Heart right ventricle (tissue), 16 donors: ENCODE measurements at regions of chr5 and their contacts with region 1.

Region 1: GRCh38 chr5:94442991-94443390 is 175.4 kb downstream of the KIAA0825 start:
- DNase-seq: no peak
- ATAC-seq: no peak
- H3K4me3 ChIP-seq: no peak overlapping the region
- H3K27ac ChIP-seq: no peak overlapping the region
- H3K4me1 ChIP-seq: no peaks in the 10 kb centered on the region
- H3K27me3 ChIP-seq: no peaks in the 10 kb centered on the region
- CTCF ChIP-seq: no peak

Region 2: GRCh38 chr5:94420885-94421284 is 22.1 kb before region 1 on chr5:
- intact Hi-C with region 1: loop called in 1 of 10 experiments (anchors 1 kb)
- DNase-seq: no peak
- ATAC-seq: no peak
- H3K4me3 ChIP-seq: no peak overlapping the region
- H3K27ac ChIP-seq: no peak overlapping the region
- H3K4me1 ChIP-seq: peaks cover 0 to 20% (median 0%) of the 10 kb centered on the region in 9 donors
- H3K27me3 ChIP-seq: no peaks in the 10 kb centered on the region
- CTCF ChIP-seq: no peak

Region 3: DNA sequence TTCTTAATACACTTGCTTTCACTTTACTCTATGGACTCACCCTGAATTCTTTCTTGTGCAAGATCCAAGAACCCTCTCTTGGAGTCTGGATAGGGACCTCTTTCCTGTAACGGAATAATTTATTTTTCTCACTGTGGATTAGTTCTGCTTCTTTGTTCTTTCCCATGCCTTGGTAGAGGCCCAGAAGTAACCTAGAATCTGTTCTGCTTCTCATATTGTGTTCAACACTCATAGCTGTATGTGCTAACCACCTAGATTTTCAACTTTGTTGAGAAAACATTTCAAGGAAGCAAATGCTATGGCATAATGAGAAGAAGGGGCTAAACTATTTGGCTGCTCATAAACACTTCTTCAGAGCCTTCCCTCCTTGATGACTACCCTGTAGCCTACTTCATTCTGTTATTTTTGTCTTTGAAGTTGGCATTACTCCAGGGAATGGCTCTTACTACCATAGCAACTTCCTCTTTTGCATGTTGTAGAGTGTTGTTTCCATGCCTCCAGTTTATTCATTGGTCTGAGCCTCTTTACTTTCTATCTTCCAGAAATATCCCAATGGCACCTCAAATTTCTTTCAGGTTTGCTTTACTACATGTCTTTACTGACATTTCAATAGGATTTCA is 101.2 kb after region 1 on chr5:
- intact Hi-C with region 1: no loop called
- DNase-seq: no peak
- ATAC-seq: peak in 7 of 8 donors; percentile 58 to 89 (median 85)
- H3K4me3 ChIP-seq: no peak overlapping the region
- H3K27ac ChIP-seq: no peak overlapping the region
- H3K4me1 ChIP-seq: peaks cover 0 to 30% (median 6%) of the 10 kb centered on the region in 9 donors
- H3K27me3 ChIP-seq: no peaks in the 10 kb centered on the region
- CTCF ChIP-seq: no peak